ENCODE measurements at regions of chr11 and their contacts with region 1.

Region 1: DNA sequence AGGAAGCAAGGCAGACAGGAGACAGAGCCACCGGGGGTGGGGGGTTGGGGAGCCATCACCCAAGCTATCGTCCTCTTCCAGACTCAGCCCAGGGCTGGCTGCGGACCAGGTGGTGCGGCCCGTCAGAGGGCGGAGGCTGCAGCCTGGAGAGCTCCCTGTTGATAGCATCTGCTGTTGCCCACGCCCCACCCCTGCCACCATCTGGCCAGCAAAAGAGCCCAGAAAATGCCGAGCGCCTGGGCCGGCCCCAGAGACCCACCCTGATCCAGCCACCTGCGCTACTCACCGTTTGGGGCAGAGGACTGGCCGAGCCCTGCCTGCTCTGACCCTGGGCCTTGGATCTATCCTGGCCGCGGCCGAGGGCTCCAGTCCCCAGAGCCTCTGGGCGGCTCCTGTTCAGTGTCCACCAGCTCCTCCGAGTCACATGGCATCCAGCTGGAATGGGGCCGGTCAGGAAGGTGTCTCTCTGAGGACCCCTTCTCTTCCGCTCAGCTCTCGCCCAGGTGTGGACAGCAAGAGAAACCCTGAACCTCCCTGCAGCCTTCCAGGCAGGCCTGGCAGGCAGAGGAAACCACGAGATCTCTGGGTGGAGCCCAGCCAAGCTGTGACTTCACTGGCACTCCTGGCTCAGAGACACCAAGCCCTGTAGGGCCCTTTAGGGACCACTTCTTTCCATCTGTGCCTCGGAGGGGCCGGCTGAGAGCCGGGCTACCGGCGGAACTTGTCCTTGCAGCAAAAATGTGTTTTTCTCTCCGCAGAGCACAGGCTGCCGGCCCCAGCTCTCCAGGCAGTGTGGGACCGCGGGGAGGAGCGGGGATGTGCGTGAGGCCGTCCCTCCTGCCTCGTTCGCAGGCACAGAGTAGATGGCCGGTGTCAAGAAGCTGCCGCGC is at the start of gene MRGPRE:
- ATAC-seq: peak in 7 of 8 experiments; percentile 3 to 94 (median 58)
- H3K4me3 ChIP-seq: no peak within 1 kb of the TSS
- H3K27ac ChIP-seq: no peak within 1 kb of the TSS
- H3K4me1 ChIP-seq: no peaks in the 10 kb centered on the region
- total RNA-seq, gene MRGPRE: 0.31 to 0.85 (median 0.36) TPM in 3 of 8 experiments, not detected in the others

Region 2: GRCh38 chr11:3000082-3000961 is 231.8 kb before region 1 on chr11:
- in situ Hi-C with region 1: no loop called
- ATAC-seq: peak; percentile 33 to 96 (median 86)
- H3K4me3 ChIP-seq: no peak overlapping the region
- H3K27ac ChIP-seq: no peak overlapping the region
- H3K4me1 ChIP-seq: peaks cover 0 to 6% of the 10 kb centered on the region in 2 donors

Region 3: DNA sequence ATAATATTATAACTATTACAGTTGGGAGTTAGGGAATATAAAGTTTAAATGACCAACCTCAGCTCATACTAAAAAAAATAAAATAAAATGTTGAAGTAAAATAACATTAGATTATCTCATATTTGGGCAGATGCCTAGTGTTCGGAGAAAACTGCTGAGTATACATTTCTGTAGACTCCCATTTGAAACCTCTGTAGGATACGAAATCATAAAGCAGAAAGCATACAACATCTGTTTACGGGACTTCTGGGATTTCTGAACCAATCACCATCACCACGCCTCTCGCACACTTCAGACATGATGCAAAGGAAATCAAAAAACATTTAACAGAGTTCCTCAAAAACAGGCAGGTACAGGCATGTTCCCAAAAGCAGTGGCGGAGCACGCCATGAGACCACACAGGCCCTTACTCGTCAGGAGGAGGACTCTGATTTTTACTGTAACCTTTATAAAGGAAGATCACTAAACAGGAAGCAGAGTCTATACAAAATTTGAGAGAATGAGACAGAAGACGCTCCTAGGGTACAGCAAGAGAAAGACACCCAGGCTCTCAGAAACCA is 138.3 kb after region 1 on chr11:
- in situ Hi-C with region 1: loop called in 1 of 9 experiments (anchors 25 kb)
- ATAC-seq: no peak
- H3K4me3 ChIP-seq: no peak overlapping the region
- H3K27ac ChIP-seq: no peak overlapping the region
- H3K4me1 ChIP-seq: no peaks in the 10 kb centered on the region

Measured in motor neuron (in vitro differentiated cells).